ENCODE measurements at regions of chr12 and their contacts with region 1.

Region 1: DNA sequence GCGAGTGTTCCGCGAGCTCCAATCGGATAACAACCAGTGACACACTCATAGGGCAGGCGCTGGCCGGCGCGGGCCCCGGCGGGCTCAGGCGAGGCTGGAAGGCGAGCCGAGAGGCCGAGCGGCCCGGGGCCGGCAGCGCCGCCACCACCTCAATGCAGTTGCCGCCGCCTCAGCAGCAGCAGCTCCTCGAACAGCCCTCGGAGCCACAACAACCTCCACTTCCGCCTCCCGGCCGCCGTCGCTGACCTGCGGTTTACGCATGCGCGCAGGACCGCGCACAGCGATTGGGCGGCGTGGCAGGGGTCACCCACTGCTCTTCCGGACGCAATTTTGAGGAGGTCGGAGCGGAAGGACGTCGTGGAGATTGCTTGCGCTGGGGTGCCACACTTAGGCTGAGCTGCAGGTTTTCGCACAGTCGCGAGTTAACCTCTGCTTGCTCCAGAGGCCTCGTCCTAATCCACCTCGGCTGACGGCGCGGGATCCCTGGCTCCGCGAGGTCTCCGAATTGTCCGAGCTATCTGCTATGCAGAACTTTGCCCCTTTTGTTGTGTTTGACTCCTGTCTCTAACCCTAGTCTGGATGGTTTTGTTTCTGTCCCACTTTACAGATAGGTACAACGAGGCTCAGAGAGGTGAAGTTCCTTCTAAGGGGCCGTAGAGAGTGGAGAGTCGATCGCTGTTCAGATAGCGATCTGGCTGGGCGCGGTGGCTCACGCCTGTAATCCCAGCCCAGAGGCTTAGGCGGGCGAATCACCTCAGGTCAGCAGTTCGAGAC is at the starts of genes ACAD10 and BRAP:
- DNase-seq: peak; percentile 97
- H3K4me3 ChIP-seq: peak within 1 kb of the TSS; percentile 79
- H3K27ac ChIP-seq: peak within 1 kb of the TSS; percentile 63
- H3K4me1 ChIP-seq: peaks cover 24% of the 10 kb centered on the region
- CTCF ChIP-seq: no peak
- total RNA-seq, gene ACAD10: 13.1 and 15.0 TPM in 2 replicates
- total RNA-seq, gene BRAP: 14.2 and 15.4 TPM in 2 replicates

Region 2: DNA sequence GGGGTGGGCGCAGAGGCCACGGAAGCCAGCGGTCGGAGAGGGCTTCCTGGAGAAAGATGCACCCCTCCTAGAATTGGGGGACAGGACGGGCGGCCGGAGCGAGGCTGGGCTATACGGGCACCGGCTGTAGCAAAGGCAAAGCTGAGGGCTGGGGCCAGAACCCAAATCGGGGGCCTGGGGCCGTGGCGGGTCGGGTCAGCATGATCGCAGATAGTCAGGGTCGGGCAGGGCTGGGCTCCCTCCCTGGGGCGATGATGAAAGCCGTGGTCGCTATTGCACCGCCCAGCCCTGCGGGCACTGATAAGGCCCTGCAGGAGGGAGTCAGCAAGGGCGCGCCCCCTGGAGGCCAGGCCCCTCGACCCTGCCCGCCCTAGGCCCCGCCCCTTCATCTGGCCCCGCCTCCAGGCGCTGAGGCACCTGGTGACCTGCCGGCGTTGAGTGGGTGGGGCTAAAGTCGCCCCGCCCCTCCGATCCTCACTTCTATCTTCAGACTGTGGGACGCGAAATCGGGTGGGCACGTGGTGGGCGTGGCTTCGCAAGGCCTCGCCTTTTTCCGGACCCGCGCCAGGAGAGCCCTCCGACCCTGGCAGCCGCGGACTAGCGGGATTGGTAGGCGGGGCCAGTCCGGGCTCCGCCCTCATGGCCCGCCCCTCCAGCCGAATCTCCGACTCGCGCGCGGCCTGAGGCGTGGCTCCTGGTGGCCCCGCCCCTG is 280.6 kb before region 1 on chr12:
- CTCF ChIA-PET with region 1: no interaction called
- POLR2A ChIA-PET with region 1: no interaction called
- intact Hi-C with region 1: loop called (anchors 10 kb)
- DNase-seq: peak; percentile 98
- H3K4me3 ChIP-seq: peak overlapping the region; percentile 93
- H3K27ac ChIP-seq: peak overlapping the region; percentile 84
- H3K4me1 ChIP-seq: peaks cover 57% of the 10 kb centered on the region
- CTCF ChIP-seq: peak; percentile 74

Region 3: DNA sequence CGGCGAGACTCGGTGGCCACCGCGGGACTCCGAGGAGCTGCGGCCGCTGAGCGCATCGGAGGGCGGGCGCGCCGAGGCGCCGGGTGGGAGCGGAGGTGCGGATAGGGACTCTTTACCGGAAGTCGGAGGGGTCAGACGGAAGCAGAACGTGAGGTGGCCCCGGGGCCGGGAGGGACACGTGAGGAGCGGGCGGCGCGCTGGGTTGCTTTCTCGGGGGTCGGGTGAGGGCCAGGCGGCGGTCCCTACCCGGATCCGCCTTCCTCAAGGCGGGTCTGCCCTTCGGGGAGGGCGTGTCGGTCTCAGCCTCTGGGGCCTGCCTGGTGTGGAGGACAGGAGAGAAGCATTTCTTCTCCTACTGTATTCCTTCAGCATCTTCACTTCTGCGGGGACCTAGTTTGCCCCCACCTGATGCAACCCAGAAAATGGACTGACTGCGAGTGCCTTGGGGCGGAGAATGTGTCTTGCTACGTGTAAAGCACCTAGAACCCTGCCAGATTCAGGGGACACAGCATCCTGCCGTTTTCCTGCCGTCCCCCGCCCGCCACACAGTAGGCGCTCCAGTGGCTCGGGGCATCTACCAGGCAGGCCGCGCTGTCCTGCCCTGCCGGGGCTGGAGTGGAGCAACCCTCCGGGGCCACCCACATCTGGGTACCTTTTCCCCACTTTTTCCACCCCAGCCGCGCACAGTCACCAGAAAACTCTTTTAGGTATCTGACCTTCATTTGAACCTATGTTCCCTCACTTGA is 86.3 kb before region 1 on chr12:
- CTCF ChIA-PET with region 1: no interaction called
- POLR2A ChIA-PET with region 1: interaction called, 4 read pairs
- intact Hi-C with region 1: loop called (anchors 1 kb)
- DNase-seq: peak; percentile 95
- H3K4me3 ChIP-seq: peak overlapping the region; percentile 97
- H3K27ac ChIP-seq: peak overlapping the region; percentile 77
- H3K4me1 ChIP-seq: peaks cover 27% of the 10 kb centered on the region
- CTCF ChIP-seq: no peak

Region 4: GRCh38 chr12:111730420-111730819 is 44.5 kb after region 1 on chr12:
- CTCF ChIA-PET with region 1: no interaction called
- POLR2A ChIA-PET with region 1: interaction called, 3 read pairs
- intact Hi-C with region 1: loop called (anchors 1 kb)
- DNase-seq: peak; percentile 89
- H3K4me3 ChIP-seq: peak overlapping the region; percentile 11
- H3K27ac ChIP-seq: peak overlapping the region; percentile 93
- H3K4me1 ChIP-seq: peaks cover 53% of the 10 kb centered on the region
- CTCF ChIP-seq: no peak

Region 5: GRCh38 chr12:111753144-111753881 is 67.4 kb after region 1 on chr12:
- CTCF ChIA-PET with region 1: no interaction called
- POLR2A ChIA-PET with region 1: interaction called, 5 read pairs
- intact Hi-C with region 1: loop called (anchors 2 kb)
- DNase-seq: peak; percentile 51
- H3K4me3 ChIP-seq: no peak overlapping the region
- H3K27ac ChIP-seq: no peak overlapping the region
- H3K4me1 ChIP-seq: peaks cover 12% of the 10 kb centered on the region
- CTCF ChIP-seq: peak; percentile 90

Region 6: GRCh38 chr12:111788178-111788654 is 102.3 kb after region 1 on chr12:
- CTCF ChIA-PET with region 1: no interaction called
- POLR2A ChIA-PET with region 1: interaction called, 3 read pairs
- intact Hi-C with region 1: loop called (anchors 1 kb)
- DNase-seq: peak; percentile 66
- H3K4me3 ChIP-seq: no peak overlapping the region
- H3K27ac ChIP-seq: no peak overlapping the region
- H3K4me1 ChIP-seq: no peaks in the 10 kb centered on the region
- CTCF ChIP-seq: peak; percentile 74

Region 7: DNA sequence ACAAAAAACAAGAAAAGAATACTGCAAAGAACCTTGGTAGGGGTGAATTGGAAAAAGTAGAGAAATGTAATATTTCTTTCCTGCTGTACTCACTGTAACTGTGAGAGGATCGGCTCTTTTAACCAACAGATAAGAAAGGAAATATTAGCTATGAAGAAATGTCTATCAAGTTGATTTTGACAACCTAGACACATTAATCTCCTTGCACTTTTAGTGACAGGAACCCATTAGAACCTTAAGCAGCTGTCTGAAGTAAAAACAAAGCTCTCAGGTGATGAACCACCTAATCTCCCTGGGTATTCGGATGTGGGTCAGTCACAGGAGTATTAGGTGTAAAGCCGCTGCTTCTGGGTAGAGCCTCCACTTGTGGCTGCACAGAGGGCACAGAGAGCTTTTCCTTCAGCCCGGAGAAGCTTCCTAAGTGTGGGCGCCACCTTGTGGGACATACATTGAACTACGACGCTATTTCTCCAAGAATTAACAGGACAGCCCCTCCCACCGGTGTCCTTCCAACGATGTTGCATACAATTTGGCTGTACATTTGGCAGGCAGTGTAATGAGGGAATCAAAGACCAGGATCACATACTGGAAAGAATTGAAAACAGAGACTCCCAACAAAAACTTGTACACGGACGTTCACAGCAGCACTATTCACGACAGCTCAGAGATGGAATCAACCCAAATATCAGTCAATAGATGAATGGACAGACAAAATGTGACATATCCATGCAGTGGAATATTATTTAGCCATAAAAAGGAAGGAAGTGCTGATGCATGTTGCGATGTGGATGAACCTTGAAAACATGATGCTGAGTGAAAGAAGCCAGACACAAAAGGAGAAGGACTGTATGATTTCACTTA is 127.2 kb after region 1 on chr12:
- CTCF ChIA-PET with region 1: interaction called, 3 read pairs
- POLR2A ChIA-PET with region 1: interaction called, 3 read pairs
- intact Hi-C with region 1: loop called (anchors 1 kb)
- DNase-seq: peak; percentile 90
- H3K4me3 ChIP-seq: no peak overlapping the region
- H3K27ac ChIP-seq: no peak overlapping the region
- H3K4me1 ChIP-seq: no peaks in the 10 kb centered on the region
- CTCF ChIP-seq: peak; percentile 93

Region 8: DNA sequence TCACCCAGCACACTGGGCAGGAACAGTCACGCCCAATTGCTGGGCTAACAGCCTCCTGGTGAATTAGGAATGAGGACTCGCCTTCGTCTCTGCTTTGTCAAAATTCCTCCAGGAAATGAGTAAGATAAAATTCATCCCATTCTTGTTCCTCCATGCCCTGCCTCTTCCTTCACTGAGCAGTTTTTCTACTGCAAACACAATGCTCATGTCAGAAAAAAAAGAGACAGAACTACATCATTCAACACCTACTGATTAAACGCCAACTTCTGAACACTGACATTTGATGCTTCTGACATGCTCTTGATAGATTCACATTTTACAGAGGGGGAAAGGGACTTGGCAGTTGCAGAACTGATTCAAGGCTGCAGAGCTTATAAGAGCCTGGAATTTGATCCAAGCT is 1333.1 kb after region 1 on chr12:
- CTCF ChIA-PET with region 1: no interaction called
- POLR2A ChIA-PET with region 1: no interaction called
- intact Hi-C with region 1: no loop called
- DNase-seq: no peak
- H3K4me3 ChIP-seq: no peak overlapping the region
- H3K27ac ChIP-seq: no peak overlapping the region
- H3K4me1 ChIP-seq: no peaks in the 10 kb centered on the region
- CTCF ChIP-seq: no peak

Measured in OCI-LY7 (cell line).